CD4-positive, alpha-beta memory T cell (primary cell): ENCODE measurements at regions of chr6 and their contacts with region 1.

Region 1: DNA sequence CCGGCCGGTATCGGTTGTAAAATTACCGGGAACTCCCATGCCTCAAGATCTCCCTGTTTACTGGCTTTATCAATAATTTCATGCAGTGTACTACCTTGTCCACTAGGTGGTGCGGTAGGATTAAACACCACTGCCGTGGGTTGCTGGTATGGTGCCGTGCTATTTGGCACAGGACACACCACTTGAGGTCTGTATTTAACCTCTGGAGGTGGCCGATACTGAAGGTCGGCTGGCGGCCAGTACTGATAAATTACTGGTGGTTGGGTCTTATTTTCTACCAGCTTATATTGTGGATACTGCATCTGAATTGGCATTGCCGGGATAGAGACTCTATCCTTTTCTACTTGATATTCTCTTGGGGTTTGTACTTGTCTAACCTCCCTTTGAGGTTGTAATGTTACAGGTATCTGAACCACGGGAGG is 14.3 kb upstream of the PTCRA start:
- DNase-seq: peak; percentile 71 to 80 (median 77)
- H3K4me3 ChIP-seq: no peak overlapping the region
- H3K4me3 Mint-ChIP-seq: no peak overlapping the region
- H3K27ac ChIP-seq: no peak overlapping the region
- H3K27ac Mint-ChIP-seq: peak overlapping the region in 1 of 7 donors; percentile 4
- H3K4me1 ChIP-seq: peaks cover 8% of the 10 kb centered on the region
- H3K4me1 Mint-ChIP-seq: peaks cover 4 to 11% (median 6%) of the 10 kb centered on the region in 4 donors
- H3K27me3 ChIP-seq: no peaks in the 10 kb centered on the region
- H3K27me3 Mint-ChIP-seq: no peaks in the 10 kb centered on the region

Region 2: GRCh38 chr6:42604150-42604549 is 297.4 kb before region 1 on chr6:
- CTCF ChIA-PET with region 1: no interaction called
- POLR2A ChIA-PET with region 1: no interaction called
- intact Hi-C with region 1: no loop called
- DNase-seq: no peak
- H3K4me3 ChIP-seq: no peak overlapping the region
- H3K4me3 Mint-ChIP-seq: no peak overlapping the region
- H3K27ac ChIP-seq: no peak overlapping the region
- H3K27ac Mint-ChIP-seq: peak overlapping the region in 1 of 7 donors; percentile 25
- H3K4me1 ChIP-seq: no peaks in the 10 kb centered on the region
- H3K4me1 Mint-ChIP-seq: peaks cover 2 to 13% (median 5%) of the 10 kb centered on the region in 4 donors
- H3K27me3 ChIP-seq: no peaks in the 10 kb centered on the region
- H3K27me3 Mint-ChIP-seq: no peaks in the 10 kb centered on the region

Region 3: DNA sequence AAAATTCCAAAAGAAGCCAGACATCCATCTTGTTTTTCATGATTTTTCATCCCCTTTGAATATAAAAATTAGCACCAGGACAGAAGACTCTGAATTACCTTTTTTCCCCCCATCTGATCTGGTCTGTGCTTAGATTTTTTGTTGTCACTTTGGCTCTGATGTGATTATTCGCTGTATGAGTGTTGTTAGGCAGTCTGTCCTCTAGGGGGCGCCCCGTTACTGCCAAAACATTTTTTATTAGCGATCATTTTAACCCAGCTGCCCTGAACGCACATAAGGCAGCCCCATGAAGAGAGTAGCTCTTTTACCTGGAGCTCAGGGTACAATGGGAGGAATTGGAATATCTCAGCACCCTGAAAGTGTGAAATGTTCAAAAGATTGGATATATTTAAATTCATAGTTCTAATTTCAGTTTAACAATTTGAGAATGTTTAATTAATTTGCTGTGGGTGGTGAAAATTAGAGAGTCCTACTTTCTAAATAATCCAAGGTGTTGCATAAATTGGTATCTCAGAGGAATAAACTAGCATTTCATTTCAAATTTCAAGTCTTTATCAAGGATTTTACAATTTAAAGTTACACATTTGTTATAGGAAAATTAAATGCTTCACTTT is 239.9 kb before region 1 on chr6:
- CTCF ChIA-PET with region 1: interaction called, 15 read pairs
- POLR2A ChIA-PET with region 1: no interaction called
- intact Hi-C with region 1: loop called (anchors 1 kb)
- DNase-seq: peak; percentile 80 to 84 (median 84)
- H3K4me3 ChIP-seq: no peak overlapping the region
- H3K4me3 Mint-ChIP-seq: no peak overlapping the region
- H3K27ac ChIP-seq: no peak overlapping the region
- H3K27ac Mint-ChIP-seq: peak overlapping the region in 4 of 7 donors; percentile 0 to 15 (median 2)
- H3K4me1 ChIP-seq: no peaks in the 10 kb centered on the region
- H3K4me1 Mint-ChIP-seq: peaks cover 0 to 2% (median 0%) of the 10 kb centered on the region in 4 donors
- H3K27me3 ChIP-seq: no peaks in the 10 kb centered on the region
- H3K27me3 Mint-ChIP-seq: no peaks in the 10 kb centered on the region

Region 4: DNA sequence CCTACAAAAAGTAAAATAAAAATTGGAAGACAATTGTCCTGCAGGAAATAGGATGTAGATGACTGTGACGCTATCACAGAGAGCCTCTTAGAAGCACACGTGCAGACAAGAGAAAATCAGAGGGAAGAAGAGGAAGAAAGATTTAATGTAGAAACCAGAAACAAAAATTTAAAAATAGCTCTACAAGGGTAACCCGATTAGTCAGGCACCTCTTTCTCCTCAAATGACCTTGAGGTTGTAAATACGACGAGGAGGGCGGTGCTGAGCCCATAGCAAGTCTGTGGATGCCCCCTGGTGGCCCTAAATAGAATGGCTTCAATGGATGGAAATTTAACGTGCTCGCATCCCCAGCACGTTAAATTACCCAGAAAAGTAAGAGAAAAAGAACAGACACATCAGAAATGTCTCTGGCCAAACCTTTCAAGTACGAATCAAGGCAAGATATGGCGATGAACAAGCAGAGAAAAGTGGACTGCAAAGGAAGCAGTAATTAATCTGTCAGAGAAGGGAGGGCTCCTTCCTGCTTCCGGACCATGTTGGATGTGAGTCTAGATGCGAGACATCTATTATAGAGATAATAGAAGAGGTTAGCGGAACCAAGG is 175.0 kb before region 1 on chr6:
- CTCF ChIA-PET with region 1: interaction called, 11 read pairs
- POLR2A ChIA-PET with region 1: interaction called, 4 read pairs
- intact Hi-C with region 1: loop called (anchors 1 kb)
- DNase-seq: peak; percentile 79 to 89 (median 81)
- H3K4me3 ChIP-seq: peak overlapping the region; percentile 53 to 55
- H3K4me3 Mint-ChIP-seq: peak overlapping the region; percentile 83 to 98 (median 92)
- H3K27ac ChIP-seq: peak overlapping the region; percentile 69
- H3K27ac Mint-ChIP-seq: peak overlapping the region; percentile 86 to 99 (median 98)
- H3K4me1 ChIP-seq: peaks cover 16% of the 10 kb centered on the region
- H3K4me1 Mint-ChIP-seq: peaks cover 11 to 24% (median 18%) of the 10 kb centered on the region in 4 donors
- H3K27me3 ChIP-seq: no peaks in the 10 kb centered on the region
- H3K27me3 Mint-ChIP-seq: no peaks in the 10 kb centered on the region

Region 5: DNA sequence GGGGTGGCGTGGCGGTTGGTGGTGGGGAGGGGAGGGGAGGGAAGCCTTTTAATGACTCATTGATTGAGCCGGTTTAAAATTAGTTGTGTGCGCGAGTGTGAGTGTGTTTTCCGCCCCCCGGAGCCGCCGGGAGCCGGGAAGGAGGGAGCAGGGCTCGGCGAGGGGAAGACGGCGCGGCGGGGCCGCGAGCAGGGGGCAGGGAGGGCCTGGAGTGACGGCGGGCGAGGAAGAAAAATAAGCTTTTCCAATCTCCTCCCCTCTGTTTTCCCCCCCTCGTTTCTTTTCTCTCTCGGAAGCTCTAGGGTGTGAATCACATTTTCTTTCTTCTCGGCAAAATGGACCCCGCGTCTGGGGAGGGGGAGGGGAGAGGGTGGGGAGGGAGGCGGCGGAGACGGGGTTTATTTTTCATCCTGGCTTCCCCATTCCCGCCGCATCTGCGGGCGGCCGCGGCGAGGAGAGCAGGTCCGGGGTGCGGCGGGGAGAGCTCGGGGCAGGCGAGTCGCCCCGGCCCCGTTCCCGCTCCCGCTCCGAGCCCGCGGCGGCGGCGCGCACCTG is 118.8 kb before region 1 on chr6:
- CTCF ChIA-PET with region 1: no interaction called
- POLR2A ChIA-PET with region 1: no interaction called
- intact Hi-C with region 1: no loop called
- DNase-seq: peak; percentile 82 to 87 (median 82)
- H3K4me3 ChIP-seq: peak overlapping the region; percentile 80 to 88
- H3K4me3 Mint-ChIP-seq: peak overlapping the region; percentile 95 to 100 (median 99)
- H3K27ac ChIP-seq: peak overlapping the region; percentile 100
- H3K27ac Mint-ChIP-seq: peak overlapping the region in 6 of 7 donors; percentile 100
- H3K4me1 ChIP-seq: peaks cover 68% of the 10 kb centered on the region
- H3K4me1 Mint-ChIP-seq: peaks cover 20 to 46% (median 28%) of the 10 kb centered on the region in 4 donors
- H3K27me3 ChIP-seq: no peaks in the 10 kb centered on the region
- H3K27me3 Mint-ChIP-seq: peaks cover 0 to 1% of the 10 kb centered on the region in 2 donors

Region 6: DNA sequence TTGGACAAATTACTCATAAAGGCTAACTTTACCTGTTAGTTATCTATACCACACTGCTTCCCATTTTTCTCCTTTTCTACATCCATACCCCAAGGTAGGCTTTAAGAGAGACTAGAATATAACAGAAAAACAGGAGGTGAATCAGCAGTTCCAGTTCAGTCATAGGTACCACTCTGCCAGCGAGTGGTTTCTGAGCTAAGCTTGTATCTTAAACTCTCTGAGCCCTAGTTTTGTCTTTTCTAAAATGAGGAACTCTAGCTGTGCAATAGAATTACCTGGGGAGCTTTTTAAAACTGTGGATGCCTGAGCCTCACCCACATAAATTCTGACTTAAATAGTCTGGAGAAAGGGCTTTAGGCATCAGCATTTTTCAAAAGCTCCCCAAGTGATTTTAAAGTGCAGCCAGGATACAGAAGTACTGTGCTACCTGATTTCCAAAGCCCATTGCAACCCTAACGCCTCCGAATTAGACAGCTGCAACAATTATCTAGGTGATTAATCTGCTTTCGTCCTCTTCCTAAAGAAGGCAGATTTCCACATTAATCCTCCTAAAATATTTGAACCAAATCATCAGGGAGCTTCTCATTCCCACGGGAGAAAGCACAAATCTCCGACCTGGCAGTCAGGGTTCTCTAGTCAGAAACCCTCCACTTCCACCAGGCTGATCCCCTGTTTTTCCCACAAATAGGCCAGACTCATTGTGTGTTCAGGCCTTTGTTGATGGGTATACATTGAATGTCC is 59.5 kb before region 1 on chr6:
- CTCF ChIA-PET with region 1: no interaction called
- POLR2A ChIA-PET with region 1: no interaction called
- intact Hi-C with region 1: no loop called
- DNase-seq: no peak
- H3K4me3 ChIP-seq: no peak overlapping the region
- H3K4me3 Mint-ChIP-seq: no peak overlapping the region
- H3K27ac ChIP-seq: no peak overlapping the region
- H3K27ac Mint-ChIP-seq: peak overlapping the region in 2 of 7 donors; percentile 4 to 10
- H3K4me1 ChIP-seq: no peaks in the 10 kb centered on the region
- H3K4me1 Mint-ChIP-seq: peaks cover 10 to 24% (median 13%) of the 10 kb centered on the region in 4 donors
- H3K27me3 ChIP-seq: no peaks in the 10 kb centered on the region
- H3K27me3 Mint-ChIP-seq: no peaks in the 10 kb centered on the region

Region 7: DNA sequence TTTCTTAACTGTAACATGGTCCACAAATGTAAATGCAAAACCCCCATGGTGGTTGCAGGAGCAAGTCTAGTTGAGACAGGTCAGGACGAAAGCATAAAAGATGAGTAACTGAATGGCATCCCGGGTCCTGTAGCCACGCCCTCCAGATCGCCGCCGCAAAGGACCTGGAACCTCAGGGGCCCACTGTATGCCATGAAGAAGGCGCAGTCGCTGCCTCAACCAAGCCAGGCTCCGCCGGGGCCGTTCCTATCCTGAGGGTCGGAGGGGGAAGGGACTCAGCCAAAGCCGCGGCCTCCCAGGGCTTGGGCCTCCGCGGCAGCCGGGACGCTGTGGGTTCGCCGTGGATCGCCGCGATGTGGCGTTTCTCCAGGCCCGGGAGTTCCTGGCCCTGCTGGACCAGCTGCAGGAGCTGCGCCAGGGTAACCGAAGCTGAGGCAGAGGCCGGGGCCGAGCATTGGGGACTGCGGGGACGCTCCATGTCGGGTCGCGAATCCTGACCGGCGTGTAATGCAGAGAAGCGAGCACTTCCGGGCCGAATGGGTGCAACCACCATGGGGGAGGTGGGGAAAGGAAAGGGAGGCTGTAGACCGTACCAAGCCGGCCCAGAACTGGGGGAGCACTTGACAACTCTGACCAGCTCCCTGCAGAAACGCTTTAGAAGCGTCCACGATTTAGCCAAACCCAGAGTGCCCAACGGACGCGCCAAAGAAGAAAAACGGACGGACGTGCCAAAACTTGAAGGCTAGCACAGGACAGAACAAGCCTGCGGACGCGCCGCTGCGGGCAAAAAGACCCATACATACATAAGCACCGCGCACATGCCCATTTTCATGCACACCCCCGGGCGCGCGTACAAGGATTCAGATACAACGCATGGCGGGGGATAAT is 11.0 kb before region 1 on chr6:
- CTCF ChIA-PET with region 1: interaction called, 19 read pairs
- POLR2A ChIA-PET with region 1: interaction called, 4 read pairs
- intact Hi-C with region 1: no loop called
- DNase-seq: peak; percentile 87 to 91 (median 89)
- H3K4me3 ChIP-seq: peak overlapping the region; percentile 59 to 97
- H3K4me3 Mint-ChIP-seq: peak overlapping the region; percentile 94 to 99 (median 98)
- H3K27ac ChIP-seq: peak overlapping the region; percentile 92
- H3K27ac Mint-ChIP-seq: peak overlapping the region; percentile 93 to 99 (median 97)
- H3K4me1 ChIP-seq: peaks cover 15% of the 10 kb centered on the region
- H3K4me1 Mint-ChIP-seq: peaks cover 9 to 21% (median 12%) of the 10 kb centered on the region in 4 donors
- H3K27me3 ChIP-seq: no peaks in the 10 kb centered on the region
- H3K27me3 Mint-ChIP-seq: no peaks in the 10 kb centered on the region

Region 8: GRCh38 chr6:43013843-43014433 is 112.4 kb after region 1 on chr6 and contains the starts of genes KLHDC3 and MEA1:
- CTCF ChIA-PET with region 1: no interaction called
- POLR2A ChIA-PET with region 1: no interaction called
- intact Hi-C with region 1: loop called (anchors 5 kb)
- DNase-seq: peak; percentile 98 to 100 (median 100)
- H3K4me3 ChIP-seq: peak within 1 kb of the TSS; percentile 75 to 84
- H3K4me3 Mint-ChIP-seq: peak within 1 kb of the TSS; percentile 91 to 97 (median 94)
- H3K27ac ChIP-seq: peak within 1 kb of the TSS; percentile 71
- H3K27ac Mint-ChIP-seq: peak within 1 kb of the TSS; percentile 75 to 98 (median 94)
- H3K4me1 ChIP-seq: peaks cover 54% of the 10 kb centered on the region
- H3K4me1 Mint-ChIP-seq: peaks cover 39 to 71% (median 56%) of the 10 kb centered on the region in 4 donors
- H3K27me3 ChIP-seq: no peaks in the 10 kb centered on the region
- H3K27me3 Mint-ChIP-seq: no peaks in the 10 kb centered on the region
- total RNA-seq, gene KLHDC3: 66.6 to 67.9 TPM
- total RNA-seq, gene MEA1: 36.2 to 36.3 TPM

Region 9: DNA sequence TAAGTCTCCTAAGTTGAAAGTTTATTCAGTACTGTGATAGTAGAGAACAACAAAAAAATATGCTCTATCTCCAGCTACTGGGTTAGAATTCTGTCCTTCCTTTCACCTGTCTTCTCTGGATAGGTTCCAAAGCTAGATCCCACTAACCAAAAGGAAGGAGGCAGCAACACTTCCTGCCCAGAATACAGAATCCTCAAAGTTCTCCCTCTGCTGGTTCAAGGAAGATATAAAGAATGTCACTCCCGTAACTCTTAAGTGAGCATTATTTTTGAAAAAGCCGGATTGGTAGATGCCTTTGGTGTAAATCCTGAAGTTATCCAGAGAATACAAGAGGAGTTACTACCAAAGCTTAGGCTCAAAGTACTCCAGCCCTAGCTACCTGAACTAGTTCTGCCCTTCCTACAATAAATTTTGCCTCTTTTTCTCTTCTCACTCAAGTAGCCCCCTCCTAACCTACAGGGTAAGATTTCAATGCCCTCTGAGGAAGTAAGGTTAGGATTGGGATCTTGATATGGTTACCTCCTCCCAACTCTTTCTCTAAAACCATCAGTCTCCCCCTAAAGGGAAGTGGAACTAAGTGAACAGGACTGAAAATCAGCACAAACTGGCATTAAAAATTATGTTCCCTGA is 433.0 kb after region 1 on chr6:
- CTCF ChIA-PET with region 1: no interaction called
- POLR2A ChIA-PET with region 1: no interaction called
- intact Hi-C with region 1: loop called (anchors 1 kb)
- DNase-seq: peak in 1 of 5 donors; percentile 12
- H3K4me3 ChIP-seq: no peak overlapping the region
- H3K4me3 Mint-ChIP-seq: no peak overlapping the region
- H3K27ac ChIP-seq: no peak overlapping the region
- H3K27ac Mint-ChIP-seq: peak overlapping the region in 6 of 7 donors; percentile 36 to 88 (median 50)
- H3K4me1 ChIP-seq: peaks cover 17% of the 10 kb centered on the region
- H3K4me1 Mint-ChIP-seq: peaks cover 15 to 30% (median 17%) of the 10 kb centered on the region in 4 donors
- H3K27me3 ChIP-seq: no peaks in the 10 kb centered on the region
- H3K27me3 Mint-ChIP-seq: no peaks in the 10 kb centered on the region